Panc1 (cell line): ENCODE measurements at regions of chr14 and their contacts with region 1.

Region 1: DNA sequence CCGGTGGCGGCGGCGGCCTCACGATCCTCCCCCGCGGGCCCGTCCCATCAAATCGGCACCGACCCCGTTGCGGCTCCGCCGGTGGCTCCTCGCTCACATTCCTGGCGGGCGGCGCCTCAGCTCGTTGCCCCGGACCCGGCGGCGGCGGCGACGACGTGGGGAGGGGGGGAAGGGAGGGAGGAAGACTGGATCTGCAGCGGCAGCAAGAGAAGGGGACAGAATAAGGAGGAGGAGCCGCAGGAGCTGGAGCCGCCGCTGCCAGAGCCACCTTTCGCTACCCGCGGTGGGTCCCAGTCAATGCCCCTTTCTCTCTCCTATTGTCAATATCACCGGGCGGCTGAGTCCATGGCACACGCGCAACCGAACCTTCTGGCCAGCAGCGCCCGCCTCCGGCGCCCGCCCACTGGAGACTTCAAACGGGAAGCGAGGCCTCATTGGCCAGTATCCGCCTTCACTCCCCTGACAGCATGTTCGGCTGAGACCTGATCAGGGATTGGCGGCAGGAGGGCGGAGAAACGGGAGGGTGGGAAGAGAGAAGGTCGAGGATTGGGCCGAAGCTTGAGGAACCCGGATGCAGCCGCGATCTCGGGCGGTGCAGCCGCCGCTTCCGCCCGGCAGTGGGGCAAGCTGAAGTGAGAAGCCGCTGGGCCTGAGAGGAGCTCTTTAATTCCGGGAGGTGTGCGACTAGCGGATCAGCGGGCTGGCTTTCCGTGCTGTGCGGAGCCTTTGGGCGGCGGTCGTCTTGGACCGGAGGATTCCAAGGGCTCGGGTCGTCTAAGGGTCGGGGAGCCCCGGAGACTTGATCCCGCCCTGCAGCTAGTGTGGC is at the start of gene PPP2R5E:
- DNase-seq: peak; percentile 90
- ATAC-seq: peak; percentile 99
- H3K4me3 ChIP-seq: peak within 1 kb of the TSS; percentile 87 to 91
- H3K27ac ChIP-seq: peak within 1 kb of the TSS; percentile 92
- H3K4me1 ChIP-seq: peaks cover 7% of the 10 kb centered on the region
- H3K27me3 ChIP-seq: no peaks in the 10 kb centered on the region
- CTCF ChIP-seq: no peak
- total RNA-seq, gene PPP2R5E: 47.2 TPM

Region 2: DNA sequence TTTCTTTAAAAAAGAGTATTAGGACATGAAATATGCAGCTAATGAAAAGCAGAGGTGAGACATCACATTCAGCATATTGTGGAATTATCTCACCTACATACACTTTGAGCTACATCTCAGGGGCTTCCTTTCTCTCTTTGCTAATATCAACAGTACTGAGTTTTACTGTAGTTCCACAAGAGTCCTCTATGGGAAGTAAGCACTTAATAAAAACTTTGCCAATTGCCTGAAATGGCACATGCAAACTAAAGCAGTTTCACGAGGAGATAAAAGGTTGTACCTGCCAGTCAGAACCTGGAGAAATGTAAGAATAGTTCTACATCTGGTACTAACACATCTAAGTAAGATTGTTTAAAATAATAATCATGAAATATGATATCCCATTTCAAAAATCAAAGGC is 151.0 kb before region 1 on chr14:
- CTCF ChIA-PET with region 1: interaction called, 4 read pairs
- POLR2A ChIA-PET with region 1: no interaction called
- in situ Hi-C with region 1: no loop called
- intact Hi-C with region 1: loop called (anchors 10 kb)
- DNase-seq: no peak
- ATAC-seq: no peak
- H3K4me3 ChIP-seq: no peak overlapping the region
- H3K27ac ChIP-seq: no peak overlapping the region
- H3K4me1 ChIP-seq: no peaks in the 10 kb centered on the region
- H3K27me3 ChIP-seq: no peaks in the 10 kb centered on the region
- CTCF ChIP-seq: no peak